HEK293 (cell line): ENCODE measurements at regions of chrX and their contacts with region 1.

Region 1: GRCh38 chrX:15128861-15129260 is 141.0 kb downstream of the ASB9 start:
- H3K4me3 ChIP-seq: no peak overlapping the region
- H3K27ac ChIP-seq: no peak overlapping the region
- H3K4me1 ChIP-seq: no peaks in the 10 kb centered on the region
- CTCF ChIP-seq: no peak

Region 2: GRCh38 chrX:15143050-15143824 is 14.4 kb after region 1 on chrX:
- CTCF ChIA-PET with region 1: interaction called, 15 read pairs
- POLR2A ChIA-PET with region 1: no interaction called
- H3K4me3 ChIP-seq: no peak overlapping the region
- H3K27ac ChIP-seq: no peak overlapping the region
- H3K4me1 ChIP-seq: no peaks in the 10 kb centered on the region
- CTCF ChIP-seq: no peak

Region 3: DNA sequence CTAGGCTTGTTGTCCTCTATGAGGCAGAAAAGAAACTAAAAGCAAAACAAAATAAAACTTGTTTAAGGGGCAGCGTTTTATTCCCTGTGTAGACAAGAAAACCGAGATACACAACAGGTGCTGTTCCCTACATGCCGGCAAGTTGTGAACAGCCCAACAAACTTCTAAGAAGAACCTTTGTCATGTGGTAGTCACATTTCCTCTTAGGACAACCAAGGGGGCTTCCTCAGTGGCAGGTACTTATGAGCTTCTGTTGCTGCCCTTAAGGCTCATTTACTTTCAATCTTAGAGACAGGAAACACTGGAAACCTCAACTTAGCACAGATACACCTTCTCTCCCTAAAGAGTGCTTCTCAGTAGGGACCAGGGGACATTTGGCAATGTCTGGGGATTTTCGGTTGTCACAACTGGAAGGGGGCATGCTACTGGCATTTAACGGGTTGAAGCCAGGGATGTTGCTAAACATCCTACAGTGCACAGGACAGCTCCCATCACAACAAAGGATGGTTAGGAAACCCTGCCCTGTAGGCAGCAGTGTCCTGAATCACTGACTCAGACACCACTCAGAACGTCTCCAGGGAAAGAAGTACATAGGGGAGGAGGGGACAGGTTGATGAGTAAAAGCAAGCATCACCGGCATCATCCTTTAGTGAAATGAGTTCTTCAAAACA is 30.0 kb after region 1 on chrX:
- CTCF ChIA-PET with region 1: no interaction called
- POLR2A ChIA-PET with region 1: no interaction called
- H3K4me3 ChIP-seq: no peak overlapping the region
- H3K27ac ChIP-seq: no peak overlapping the region
- H3K4me1 ChIP-seq: no peaks in the 10 kb centered on the region
- CTCF ChIP-seq: no peak